Calu3 (cell line): ENCODE measurements at regions of chr18 and their contacts with region 1.

Region 1: GRCh38 chr18:46281185-46282176 is 177.3 kb downstream of the HAUS1 start:
- DNase-seq: peak; percentile 79
- H3K4me3 Mint-ChIP-seq: no peak overlapping the region
- H3K27ac Mint-ChIP-seq: no peak overlapping the region
- H3K4me1 Mint-ChIP-seq: peaks cover 17% of the 10 kb centered on the region
- H3K27me3 Mint-ChIP-seq: no peaks in the 10 kb centered on the region
- CTCF ChIP-seq: peak; percentile 69

Region 2: GRCh38 chr18:46173393-46174341 is 107.8 kb before region 1 on chr18:
- CTCF ChIA-PET with region 1: interaction called, 10 read pairs
- intact Hi-C with region 1: no loop called
- DNase-seq: peak; percentile 97
- H3K4me3 Mint-ChIP-seq: peak overlapping the region; percentile 97
- H3K27ac Mint-ChIP-seq: peak overlapping the region; percentile 97
- H3K4me1 Mint-ChIP-seq: peaks cover 9% of the 10 kb centered on the region
- H3K27me3 Mint-ChIP-seq: no peaks in the 10 kb centered on the region
- CTCF ChIP-seq: peak; percentile 93

Region 3: GRCh38 chr18:46338766-46339165 is 57.3 kb after region 1 on chr18:
- CTCF ChIA-PET with region 1: interaction called, 6 read pairs
- intact Hi-C with region 1: loop called (anchors 2 kb)
- DNase-seq: no peak
- H3K4me3 Mint-ChIP-seq: no peak overlapping the region
- H3K27ac Mint-ChIP-seq: no peak overlapping the region
- H3K4me1 Mint-ChIP-seq: peaks cover 29% of the 10 kb centered on the region
- H3K27me3 Mint-ChIP-seq: peaks cover 40% of the 10 kb centered on the region
- CTCF ChIP-seq: no peak

Region 4: GRCh38 chr18:46481048-46481846 is 199.8 kb after region 1 on chr18:
- CTCF ChIA-PET with region 1: interaction called, 18 read pairs
- intact Hi-C with region 1: loop called (anchors 1 kb)
- DNase-seq: peak; percentile 72
- H3K4me3 Mint-ChIP-seq: no peak overlapping the region
- H3K27ac Mint-ChIP-seq: no peak overlapping the region
- H3K4me1 Mint-ChIP-seq: no peaks in the 10 kb centered on the region
- H3K27me3 Mint-ChIP-seq: peaks cover 29% of the 10 kb centered on the region
- CTCF ChIP-seq: peak; percentile 60

Region 5: GRCh38 chr18:46622999-46623398 is 341.5 kb after region 1 on chr18:
- CTCF ChIA-PET with region 1: interaction called, 16 read pairs
- intact Hi-C with region 1: loop called (anchors 1 kb)
- DNase-seq: no peak
- H3K4me3 Mint-ChIP-seq: no peak overlapping the region
- H3K27ac Mint-ChIP-seq: no peak overlapping the region
- H3K4me1 Mint-ChIP-seq: no peaks in the 10 kb centered on the region
- H3K27me3 Mint-ChIP-seq: peaks cover 91% of the 10 kb centered on the region
- CTCF ChIP-seq: no peak

Region 6: DNA sequence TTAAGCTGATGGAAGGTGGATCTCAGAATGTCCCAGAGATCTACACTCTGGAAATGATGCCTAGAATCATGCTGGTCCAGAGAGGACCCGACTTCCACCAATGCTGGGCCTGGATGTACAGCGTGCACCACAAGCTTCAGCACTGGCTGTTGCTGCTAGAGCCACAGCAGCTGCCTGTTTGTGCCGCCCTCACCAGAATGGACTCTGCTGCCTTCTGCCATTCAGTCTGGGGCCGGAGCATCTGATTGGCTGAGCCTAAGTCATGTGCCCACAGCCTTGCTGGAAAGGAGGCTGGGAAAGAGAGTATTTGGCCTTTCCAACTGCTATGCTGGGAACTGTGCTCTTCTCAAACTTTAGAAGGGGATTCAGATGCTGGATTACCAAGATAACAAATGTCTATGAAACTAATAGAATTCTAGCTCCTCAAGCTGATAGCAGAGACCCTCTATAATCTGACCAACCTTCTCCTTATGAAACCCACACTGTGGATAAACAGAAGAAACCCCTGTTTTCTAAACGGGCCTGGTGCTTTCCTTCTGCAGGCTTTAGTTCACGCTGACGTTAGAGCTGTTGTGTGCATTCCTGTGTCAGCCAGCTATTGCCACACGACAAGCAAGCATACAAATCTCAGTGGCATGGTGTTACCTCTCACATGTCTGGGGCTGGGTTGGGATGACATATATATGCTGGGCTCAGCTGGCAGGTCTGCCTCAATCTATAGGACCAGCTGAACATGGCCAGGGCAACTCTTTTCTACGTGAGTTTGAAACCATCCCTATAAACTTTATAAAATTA is 379.7 kb after region 1 on chr18:
- CTCF ChIA-PET with region 1: interaction called, 42 read pairs
- intact Hi-C with region 1: loop called (anchors 2 kb)
- DNase-seq: peak; percentile 17
- H3K4me3 Mint-ChIP-seq: no peak overlapping the region
- H3K27ac Mint-ChIP-seq: no peak overlapping the region
- H3K4me1 Mint-ChIP-seq: no peaks in the 10 kb centered on the region
- H3K27me3 Mint-ChIP-seq: peaks cover 84% of the 10 kb centered on the region
- CTCF ChIP-seq: no peak

Region 7: DNA sequence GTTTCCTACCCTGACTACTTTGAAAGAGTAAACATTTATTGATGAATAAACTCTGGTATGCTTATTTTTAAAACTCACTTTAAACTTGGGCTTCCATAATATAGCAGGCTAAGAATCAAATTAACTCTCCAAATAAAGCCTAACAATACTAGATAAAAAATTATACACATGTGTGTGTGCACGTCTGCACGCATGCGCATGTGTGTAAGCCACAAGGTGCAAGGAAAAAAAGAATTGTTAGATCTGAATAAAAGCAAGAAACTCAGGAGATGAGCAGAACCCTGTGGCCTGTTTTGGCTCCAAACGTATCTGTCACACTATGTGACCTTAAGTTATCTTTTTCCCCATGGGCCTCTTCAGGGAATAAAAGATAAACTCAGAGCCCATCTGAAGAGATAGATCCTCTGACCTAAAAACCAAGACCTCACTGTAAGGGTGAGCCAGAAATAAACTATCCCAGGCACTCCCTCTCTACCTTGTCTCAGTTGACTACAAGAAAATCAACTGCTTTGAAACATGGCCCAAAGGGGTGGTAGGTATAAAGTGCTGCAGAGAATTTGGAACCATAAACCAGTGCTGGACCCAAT is 862.5 kb after region 1 on chr18:
- CTCF ChIA-PET with region 1: no interaction called
- intact Hi-C with region 1: no loop called
- DNase-seq: no peak
- H3K4me3 Mint-ChIP-seq: no peak overlapping the region
- H3K27ac Mint-ChIP-seq: no peak overlapping the region
- H3K4me1 Mint-ChIP-seq: peaks cover 9% of the 10 kb centered on the region
- H3K27me3 Mint-ChIP-seq: no peaks in the 10 kb centered on the region
- CTCF ChIP-seq: no peak